ENCODE measurements at regions of chr6 and their contacts with region 1.

Region 1: DNA sequence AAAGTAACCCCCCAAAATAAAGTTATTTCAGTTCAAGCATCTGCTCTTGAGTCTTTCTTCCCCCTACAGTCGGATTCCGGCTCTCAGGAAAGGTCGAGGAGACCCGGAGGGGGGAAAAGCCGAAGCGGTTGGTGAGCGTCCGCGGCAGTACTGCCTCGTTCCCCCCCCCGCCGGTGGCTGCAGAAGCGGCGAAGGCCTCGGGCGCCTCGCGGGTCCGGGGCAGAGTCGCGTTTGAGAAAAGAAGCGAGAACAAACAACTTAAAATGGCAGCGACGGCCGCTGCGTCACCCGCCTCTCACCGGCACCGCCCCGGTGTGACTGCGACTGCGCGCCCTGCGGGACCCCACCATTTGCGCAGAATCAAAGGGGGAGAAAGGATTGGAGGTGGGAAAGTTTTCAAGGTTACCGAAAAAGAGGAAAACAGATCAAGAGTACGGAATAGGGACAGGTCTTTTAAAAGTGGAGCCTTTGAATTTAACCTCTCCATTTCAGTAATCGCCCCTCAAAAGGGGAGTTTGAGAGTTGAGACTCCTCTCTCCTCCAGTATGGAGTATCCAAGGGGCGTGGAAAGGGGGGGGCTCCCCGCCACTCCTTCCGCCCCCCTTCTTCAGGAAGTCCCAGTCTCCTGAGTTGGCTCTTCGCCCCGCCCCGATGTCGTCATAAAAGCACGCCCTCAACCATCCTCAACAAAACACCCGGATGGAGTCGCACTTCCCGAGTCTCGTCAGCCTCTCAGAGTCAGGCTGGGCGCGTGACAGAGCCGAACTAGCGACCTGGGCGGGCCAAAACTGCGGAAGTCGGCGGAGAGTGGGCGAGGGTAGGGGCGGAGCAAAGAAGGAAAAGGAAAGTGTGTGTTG is 1.9 kb upstream of the C6orf62 start:
- DNase-seq: peak; percentile 100
- H3K4me3 ChIP-seq: peak overlapping the region; percentile 64 to 99 (median 98)
- H3K27ac ChIP-seq: peak overlapping the region; percentile 99
- H3K4me1 ChIP-seq: peaks cover 9% of the 10 kb centered on the region
- H3K27me3 ChIP-seq: no peaks in the 10 kb centered on the region
- CTCF ChIP-seq: no peak

Region 2: GRCh38 chr6:24554485-24554884 is 166.3 kb before region 1 on chr6:
- CTCF ChIA-PET with region 1: no interaction called
- dilution Hi-C with region 1: no loop called
- in situ Hi-C with region 1: no loop called
- intact Hi-C with region 1: no loop called
- DNase-seq: no peak
- H3K4me3 ChIP-seq: no peak overlapping the region
- H3K27ac ChIP-seq: no peak overlapping the region
- H3K4me1 ChIP-seq: no peaks in the 10 kb centered on the region
- H3K27me3 ChIP-seq: no peaks in the 10 kb centered on the region
- CTCF ChIP-seq: no peak

Region 3: DNA sequence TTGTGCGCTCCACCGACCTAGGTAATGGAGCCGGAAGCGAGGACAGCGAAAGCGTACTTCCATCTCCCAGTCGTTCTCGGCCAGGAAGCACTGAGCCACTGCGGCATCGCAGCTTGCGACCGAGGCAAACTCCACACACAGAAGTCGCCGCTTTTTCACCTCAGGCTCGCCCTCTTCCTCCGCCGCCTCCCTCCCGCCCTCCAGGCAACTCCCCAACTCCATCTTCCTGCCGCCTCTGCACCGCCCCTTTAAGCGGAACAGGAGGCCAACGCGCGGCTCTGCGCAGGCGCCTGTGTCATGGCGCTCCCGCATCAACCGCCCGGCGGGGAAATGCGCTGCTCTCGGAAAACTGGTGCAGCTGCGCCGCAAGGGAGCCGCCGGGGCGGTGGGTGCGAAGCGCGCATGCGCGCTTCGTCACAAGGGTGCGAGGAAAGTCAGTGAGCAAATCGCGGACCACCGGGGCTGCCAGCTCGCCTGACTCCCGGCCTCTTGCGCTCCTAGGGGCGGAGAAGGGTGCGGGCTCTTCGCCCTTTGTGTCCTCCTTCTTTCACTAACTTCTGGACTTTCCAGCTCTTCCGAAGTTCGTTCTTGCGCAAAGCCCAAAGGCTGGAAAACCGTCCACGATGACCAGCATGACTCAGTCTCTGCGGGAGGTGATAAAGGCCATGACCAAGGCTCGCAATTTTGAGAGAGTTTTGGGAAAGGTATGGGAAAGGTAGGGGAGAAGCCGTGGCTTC is 54.0 kb before region 1 on chr6 and contains the starts of genes ACOT13 and TDP2:
- CTCF ChIA-PET with region 1: no interaction called
- dilution Hi-C with region 1: no loop called
- in situ Hi-C with region 1: no loop called
- intact Hi-C with region 1: loop called (anchors 1 kb)
- DNase-seq: peak; percentile 96
- H3K4me3 ChIP-seq: peak within 1 kb of the TSS; percentile 69 to 94 (median 93)
- H3K27ac ChIP-seq: peak within 1 kb of the TSS; percentile 83
- H3K4me1 ChIP-seq: peaks cover 20% of the 10 kb centered on the region
- H3K27me3 ChIP-seq: no peaks in the 10 kb centered on the region
- CTCF ChIP-seq: peak; percentile 35 to 44
- total RNA-seq, gene ACOT13: 4.8 to 32.5 TPM
- total RNA-seq, gene TDP2: 16.3 to 28.5 TPM

Region 4: GRCh38 chr6:24766680-24767462 is 46.0 kb after region 1 on chr6:
- CTCF ChIA-PET with region 1: no interaction called
- dilution Hi-C with region 1: no loop called
- in situ Hi-C with region 1: loop called in 1 of 2 experiments (anchors 10 kb)
- intact Hi-C with region 1: loop called (anchors 1 kb)
- DNase-seq: peak; percentile 20
- H3K4me3 ChIP-seq: no peak overlapping the region
- H3K27ac ChIP-seq: no peak overlapping the region
- H3K4me1 ChIP-seq: peaks cover 4% of the 10 kb centered on the region
- H3K27me3 ChIP-seq: no peaks in the 10 kb centered on the region
- CTCF ChIP-seq: peak; percentile 39 to 49

Region 5: GRCh38 chr6:24802271-24803059 is 81.6 kb after region 1 on chr6:
- CTCF ChIA-PET with region 1: no interaction called
- dilution Hi-C with region 1: no loop called
- in situ Hi-C with region 1: no loop called
- intact Hi-C with region 1: no loop called
- DNase-seq: peak; percentile 6
- H3K4me3 ChIP-seq: no peak overlapping the region
- H3K27ac ChIP-seq: no peak overlapping the region
- H3K4me1 ChIP-seq: peaks cover 4% of the 10 kb centered on the region
- H3K27me3 ChIP-seq: no peaks in the 10 kb centered on the region
- CTCF ChIP-seq: no peak

Region 6: DNA sequence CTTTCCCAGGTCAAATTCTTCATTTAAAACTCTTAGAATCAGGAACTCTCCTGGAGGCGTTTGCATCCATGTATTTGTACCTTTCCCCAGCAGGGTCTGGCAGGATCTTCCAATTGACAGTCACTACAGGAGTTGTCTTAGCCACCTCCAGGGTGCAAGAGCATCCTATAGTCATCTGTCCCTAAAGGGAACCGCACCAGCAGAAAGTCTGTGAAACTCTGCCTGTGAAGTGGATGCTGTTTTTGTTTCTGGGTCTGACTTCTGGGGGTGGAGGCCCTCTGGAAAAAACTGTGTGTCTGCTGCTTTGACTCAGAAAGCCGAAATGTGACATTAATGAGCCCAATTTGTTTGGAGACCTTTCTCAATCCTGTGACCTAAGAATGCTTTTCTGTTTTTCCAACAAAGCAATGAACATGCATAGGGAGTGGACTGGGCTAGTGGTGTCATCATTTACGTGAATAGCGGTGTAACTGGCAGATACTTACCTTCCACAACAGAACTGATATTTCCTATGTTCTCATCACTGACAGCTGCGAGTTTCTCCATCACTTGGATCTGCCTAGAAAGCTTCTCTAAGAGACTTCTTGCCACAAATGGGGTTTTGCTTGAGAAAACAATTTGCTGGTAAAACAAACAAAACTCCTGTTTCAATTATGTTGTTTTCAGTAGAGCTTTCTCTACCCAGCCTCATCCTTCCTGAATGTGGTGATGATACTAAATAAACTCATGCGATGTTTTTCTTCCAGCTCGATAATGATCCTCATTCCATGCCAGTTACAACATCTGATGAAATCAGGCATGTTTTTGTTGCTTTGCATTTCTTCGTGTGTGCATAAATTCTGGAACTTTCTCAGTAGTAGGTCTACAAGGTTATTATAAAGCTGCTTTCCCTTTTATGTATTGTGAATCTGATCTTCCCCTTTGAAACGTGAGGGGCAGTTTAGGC is 111.2 kb after region 1 on chr6:
- CTCF ChIA-PET with region 1: no interaction called
- dilution Hi-C with region 1: no loop called
- in situ Hi-C with region 1: no loop called
- intact Hi-C with region 1: loop called (anchors 1 kb)
- DNase-seq: no peak
- H3K4me3 ChIP-seq: no peak overlapping the region
- H3K27ac ChIP-seq: no peak overlapping the region
- H3K4me1 ChIP-seq: peaks cover 14% of the 10 kb centered on the region
- H3K27me3 ChIP-seq: no peaks in the 10 kb centered on the region
- CTCF ChIP-seq: no peak

Region 7: GRCh38 chr6:25250878-25251277 is 530.0 kb after region 1 on chr6:
- CTCF ChIA-PET with region 1: no interaction called
- dilution Hi-C with region 1: loop called (anchors 10 kb)
- in situ Hi-C with region 1: no loop called
- intact Hi-C with region 1: no loop called
- DNase-seq: peak; percentile 97
- H3K4me3 ChIP-seq: no peak overlapping the region
- H3K27ac ChIP-seq: peak overlapping the region; percentile 39
- H3K4me1 ChIP-seq: peaks cover 5% of the 10 kb centered on the region
- H3K27me3 ChIP-seq: no peaks in the 10 kb centered on the region
- CTCF ChIP-seq: no peak

Measured in mammary epithelial cell (primary cell).